ENCODE measurements at regions of chr6 and their contacts with region 1.

Region 1: DNA sequence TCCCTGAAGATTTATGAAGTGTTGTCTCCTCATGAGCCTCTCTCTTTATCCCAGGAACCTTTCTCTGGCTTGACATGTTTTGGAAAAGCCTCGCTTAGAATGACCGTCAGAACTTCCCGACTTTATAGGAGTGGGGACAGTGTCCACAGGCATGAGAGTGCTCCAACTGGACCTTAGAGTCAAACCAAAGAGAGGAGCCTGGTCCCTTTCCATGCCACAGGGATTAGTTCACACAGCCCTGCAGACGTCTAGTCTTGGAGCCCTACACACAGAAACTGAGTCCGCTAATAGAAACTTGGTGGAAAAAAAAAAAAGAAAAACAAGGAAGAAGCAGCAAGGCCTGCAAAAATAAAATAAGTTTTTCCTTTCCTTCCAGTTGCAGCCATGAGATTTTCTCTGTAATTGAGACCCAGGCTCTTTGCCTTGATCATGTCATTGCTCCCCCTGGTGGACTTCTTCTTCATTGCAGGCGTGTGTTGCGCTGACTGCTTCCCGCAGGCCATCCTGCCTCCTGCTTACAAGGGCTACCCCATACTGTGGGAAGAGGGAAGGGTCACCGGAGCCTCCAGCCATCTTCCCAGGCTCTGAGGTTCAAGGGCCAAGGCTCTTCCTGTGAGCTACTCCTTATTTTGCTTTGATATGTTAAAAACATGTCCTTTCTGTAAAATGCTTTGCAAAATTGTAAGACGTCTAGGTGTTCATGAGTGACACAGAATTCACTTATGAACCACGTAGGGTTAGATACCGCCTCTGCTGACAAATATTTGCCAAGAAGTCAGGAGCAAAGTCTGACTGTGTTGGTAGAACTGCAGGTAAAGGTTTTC is 201.0 kb downstream of the UST start:
- DNase-seq: peak; percentile 79
- ATAC-seq: peak; percentile 94 to 95
- H3K4me3 ChIP-seq: no peak overlapping the region
- H3K27ac ChIP-seq: no peak overlapping the region
- H3K4me1 ChIP-seq: peaks cover 7% of the 10 kb centered on the region
- H3K27me3 ChIP-seq: no peaks in the 10 kb centered on the region
- CTCF ChIP-seq: peak; percentile 95

Region 2: GRCh38 chr6:148578245-148578732 is 369.5 kb before region 1 on chr6:
- intact Hi-C with region 1: loop called (anchors 10 kb)
- DNase-seq: peak; percentile 86
- ATAC-seq: peak; percentile 98 to 99
- H3K4me3 ChIP-seq: no peak overlapping the region
- H3K27ac ChIP-seq: no peak overlapping the region
- H3K4me1 ChIP-seq: peaks cover 6% of the 10 kb centered on the region
- H3K27me3 ChIP-seq: no peaks in the 10 kb centered on the region
- CTCF ChIP-seq: peak; percentile 85

Region 3: DNA sequence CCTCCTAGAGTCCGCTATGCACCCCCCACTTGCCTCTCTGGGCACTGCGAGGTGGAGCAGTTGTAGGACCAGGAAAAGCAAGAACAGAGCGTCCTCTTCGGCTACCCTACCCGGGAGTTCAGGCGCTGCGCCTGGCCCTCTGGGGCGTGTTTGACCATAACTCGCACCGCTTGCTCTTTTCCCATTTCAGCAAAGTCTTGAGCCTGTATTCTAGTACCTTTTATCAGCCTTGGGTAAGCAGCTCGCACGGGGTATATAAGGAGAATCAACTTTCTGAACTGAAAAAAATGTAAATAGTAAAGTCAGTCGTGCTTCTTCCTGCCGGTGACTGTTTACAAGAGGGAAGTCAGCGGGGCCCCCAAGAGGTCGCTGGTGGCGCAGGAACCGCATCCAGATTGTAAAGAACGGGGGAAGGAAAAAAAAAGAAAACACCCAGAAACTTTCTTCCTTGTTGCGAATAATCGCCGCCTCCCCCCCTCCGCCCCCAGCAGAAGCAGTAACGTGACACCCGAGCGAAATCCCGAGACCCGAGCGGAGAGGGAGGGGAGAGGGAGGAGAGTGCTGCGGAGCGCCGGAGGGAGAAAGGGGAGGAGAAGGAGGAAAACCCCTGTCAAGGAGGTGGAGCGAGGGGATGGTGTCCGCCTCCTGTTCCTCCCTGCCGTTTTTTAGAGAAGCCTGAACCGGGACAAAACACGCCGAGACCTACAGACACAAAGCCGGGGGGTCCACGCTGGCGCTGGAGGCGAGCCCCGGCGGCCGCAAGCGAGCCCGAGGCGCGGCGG is 201.3 kb before region 1 on chr6 and contains the start of gene UST:
- intact Hi-C with region 1: loop called (anchors 10 kb)
- DNase-seq: peak; percentile 87
- ATAC-seq: peak; percentile 86 to 88
- H3K4me3 ChIP-seq: peak within 1 kb of the TSS; percentile 81
- H3K27ac ChIP-seq: peak within 1 kb of the TSS; percentile 75
- H3K4me1 ChIP-seq: peaks cover 24% of the 10 kb centered on the region
- H3K27me3 ChIP-seq: peaks cover 17% of the 10 kb centered on the region
- CTCF ChIP-seq: peak; percentile 41
- total RNA-seq, gene UST: 11.8 TPM

Region 4: DNA sequence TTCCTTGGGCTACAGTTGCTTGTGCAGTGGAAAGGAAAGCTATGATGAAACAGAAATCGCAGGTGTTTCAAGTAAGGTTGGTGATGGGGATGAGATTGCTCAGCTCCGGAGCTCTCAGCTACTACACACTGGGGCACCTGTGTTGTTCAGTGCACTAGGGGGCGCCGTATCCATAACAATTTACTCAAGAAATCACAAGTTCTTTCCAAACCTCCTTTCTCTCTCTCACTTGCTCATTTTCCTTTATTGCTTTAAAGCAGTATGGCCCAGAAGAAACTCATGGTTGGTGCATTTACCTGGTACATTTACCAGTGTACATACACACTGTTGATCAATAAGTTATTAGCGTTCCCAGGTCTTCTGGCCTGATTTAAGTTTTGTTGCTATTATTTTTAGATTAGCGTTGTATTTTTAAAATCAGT is 134.5 kb after region 1 on chr6:
- intact Hi-C with region 1: no loop called
- DNase-seq: peak; percentile 75
- ATAC-seq: peak; percentile 84 to 88
- H3K4me3 ChIP-seq: no peak overlapping the region
- H3K27ac ChIP-seq: no peak overlapping the region
- H3K4me1 ChIP-seq: peaks cover 19% of the 10 kb centered on the region
- H3K27me3 ChIP-seq: no peaks in the 10 kb centered on the region
- CTCF ChIP-seq: peak; percentile 82

Measured in lower lobe of right lung (tissue), 2 donors.